SK-N-SH (cell line): ENCODE measurements at regions of chr19 and their contacts with region 1.

Region 1: DNA sequence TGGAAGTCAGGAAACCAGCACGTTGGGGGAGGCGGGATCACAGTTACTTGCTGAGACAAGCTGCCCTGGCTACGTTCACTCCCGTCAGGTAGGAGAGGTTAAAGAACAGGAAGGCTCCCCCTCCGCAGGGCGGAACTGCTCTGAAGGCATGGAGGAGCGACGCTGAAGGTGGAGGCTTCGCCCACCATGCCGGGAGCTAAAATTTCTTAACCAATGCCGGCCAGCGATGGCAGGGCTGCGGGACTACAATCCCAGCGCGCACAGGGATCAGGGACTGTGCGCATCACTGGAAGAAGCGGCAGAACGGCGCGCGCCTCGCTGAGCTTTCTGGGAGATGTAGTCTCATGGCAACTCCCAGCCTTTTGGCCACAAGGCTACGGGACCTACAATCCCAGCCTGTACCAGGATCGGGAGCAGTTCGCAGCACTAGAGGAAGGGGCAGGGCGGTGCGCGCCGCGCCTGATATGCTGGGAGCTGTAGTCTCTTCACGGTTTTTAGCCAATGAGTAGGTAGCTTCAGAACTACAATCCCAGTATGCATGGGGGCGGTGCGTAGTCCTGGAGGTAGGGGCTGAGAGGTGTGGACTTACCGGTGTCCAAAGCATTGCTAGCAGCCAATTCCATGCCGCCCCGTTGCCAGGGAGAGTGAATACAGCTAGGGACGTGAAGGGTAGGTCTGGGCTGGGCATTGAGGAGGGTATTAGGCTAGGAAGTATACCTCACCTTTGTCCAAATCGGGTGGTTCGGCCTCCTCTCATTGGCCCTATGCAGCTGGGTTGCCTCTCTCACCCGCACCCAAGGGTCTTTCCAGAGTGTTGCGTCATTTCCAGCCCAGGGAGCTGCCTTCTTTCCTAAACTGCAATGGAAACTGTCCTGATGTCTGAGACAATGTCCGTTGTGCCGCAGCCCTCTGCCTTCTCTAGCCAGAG is 12.8 kb upstream of the ZNF682 start:
- DNase-seq: peak; percentile 86
- H3K4me3 ChIP-seq: peak overlapping the region; percentile 81 to 84
- H3K27ac ChIP-seq: peak overlapping the region; percentile 47 to 85; a peak in 3 of 4 replicates
- H3K4me1 ChIP-seq: peaks cover 0 to 7% of the 10 kb centered on the region in 2 experiments; a peak in 1 of 4 replicates
- H3K27me3 ChIP-seq: no peaks in the 10 kb centered on the region
- CTCF ChIP-seq: no peak
- EP300 ChIP-seq: no peak
- RAD21 ChIP-seq: no peak

Region 2: GRCh38 chr19:20039203-20039723 is 12.8 kb before region 1 on chr19 and contains the start of gene ZNF682:
- CTCF ChIA-PET with region 1: interaction called, 5 read pairs
- POLR2A ChIA-PET with region 1: interaction called, 26 read pairs
- DNase-seq: peak; percentile 98
- H3K4me3 ChIP-seq: peak within 1 kb of the TSS; percentile 85 to 89
- H3K27ac ChIP-seq: peak within 1 kb of the TSS; percentile 70 to 79; a peak in 3 of 4 replicates
- H3K4me1 ChIP-seq: peaks cover 0 to 5% of the 10 kb centered on the region in 2 experiments; a peak in 2 of 4 replicates
- H3K27me3 ChIP-seq: no peaks in the 10 kb centered on the region
- CTCF ChIP-seq: no peak
- EP300 ChIP-seq: no peak
- RAD21 ChIP-seq: no peak
- polyA plus RNA-seq, gene ZNF682: 1.7 and 2.5 TPM in 2 replicates

Region 3: GRCh38 chr19:20077791-20078463 is 25.8 kb after region 1 on chr19 and contains the start of gene ZNF90:
- CTCF ChIA-PET with region 1: interaction called, 8 read pairs
- POLR2A ChIA-PET with region 1: interaction called, 16 read pairs
- DNase-seq: peak; percentile 87
- H3K4me3 ChIP-seq: peak within 1 kb of the TSS; percentile 60 to 65
- H3K27ac ChIP-seq: peak within 1 kb of the TSS; percentile 27 to 73
- H3K4me1 ChIP-seq: no peaks in the 10 kb centered on the region; a peak in 1 of 4 replicates
- H3K27me3 ChIP-seq: no peaks in the 10 kb centered on the region
- CTCF ChIP-seq: 0 out of 2 replicates have a peak, but pooled peaks have one; percentile 16
- EP300 ChIP-seq: no peak
- RAD21 ChIP-seq: no peak
- polyA plus RNA-seq, gene ZNF90: 1.4 and 1.5 TPM in 2 replicates

Region 4: DNA sequence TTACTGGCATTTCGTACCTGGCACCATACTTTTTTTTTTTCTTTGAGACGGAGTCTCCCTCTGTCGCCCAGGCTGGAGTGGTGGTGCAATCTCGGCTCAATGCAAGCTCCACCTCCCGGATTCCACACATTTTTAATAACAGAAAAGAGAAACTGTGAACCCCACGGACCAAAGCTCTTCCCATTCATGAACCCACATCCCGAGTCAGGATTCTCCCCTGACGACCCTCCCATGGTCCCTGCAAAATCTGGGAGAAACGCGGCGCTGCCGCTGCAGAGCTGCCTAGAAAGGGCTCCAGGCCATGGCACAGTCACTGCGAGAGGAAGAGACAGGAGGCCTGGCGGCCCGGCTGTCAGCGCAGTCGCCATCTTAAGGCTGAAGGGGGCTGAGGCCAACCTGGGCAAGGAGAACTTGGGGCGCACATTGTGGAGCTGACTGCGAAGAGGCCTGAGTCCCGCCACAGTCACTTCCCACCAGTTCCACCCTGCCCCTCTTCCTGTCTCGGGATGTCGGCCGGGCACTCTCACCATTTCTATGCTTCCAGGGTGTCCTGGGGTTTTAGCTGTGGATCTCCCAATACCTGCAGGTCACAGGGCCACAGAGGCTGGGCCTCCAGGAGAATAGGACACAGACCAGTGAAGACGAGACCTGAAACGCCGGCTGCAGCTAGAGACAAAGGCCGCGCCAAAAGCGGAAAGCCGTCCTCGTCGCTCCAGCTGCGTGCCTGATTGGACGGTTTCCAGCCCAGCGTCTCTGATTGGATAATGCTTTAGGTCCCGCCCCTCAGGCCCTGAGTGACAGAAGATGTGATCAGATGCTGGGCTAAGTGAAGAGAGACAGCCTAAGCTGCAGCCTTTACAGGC is 185.9 kb after region 1 on chr19:
- CTCF ChIA-PET with region 1: no interaction called
- POLR2A ChIA-PET with region 1: interaction called, 12 read pairs
- DNase-seq: peak; percentile 80
- H3K4me3 ChIP-seq: peak overlapping the region; percentile 68 to 79
- H3K27ac ChIP-seq: peak overlapping the region in 1 of 2 experiments; percentile 56; a peak in 2 of 4 replicates
- H3K4me1 ChIP-seq: peaks cover 0 to 3% of the 10 kb centered on the region in 2 experiments; a peak in 1 of 4 replicates
- H3K27me3 ChIP-seq: no peaks in the 10 kb centered on the region
- CTCF ChIP-seq: no peak
- EP300 ChIP-seq: no peak
- RAD21 ChIP-seq: peak; percentile 45; the same call in 1 of the 2 replicates